Activated CD4-positive, alpha-beta T cell treated with anti-CD3 and anti-CD28 coated beads, Interleukin-2, amount 10 ng/mL, durations not matched to agents 24 days and 14 days (primary cell): ENCODE measurements at regions of chr7 and their contacts with region 1.

Region 1: GRCh38 chr7:102230593-102230992 is 56.1 kb upstream of the SH2B2 start:
- DNase-seq: no peak
- H3K4me3 Mint-ChIP-seq: no peak overlapping the region
- H3K27ac Mint-ChIP-seq: no peak overlapping the region
- H3K4me1 Mint-ChIP-seq: no peaks in the 10 kb centered on the region
- H3K27me3 Mint-ChIP-seq: no peaks in the 10 kb centered on the region

Region 2: DNA sequence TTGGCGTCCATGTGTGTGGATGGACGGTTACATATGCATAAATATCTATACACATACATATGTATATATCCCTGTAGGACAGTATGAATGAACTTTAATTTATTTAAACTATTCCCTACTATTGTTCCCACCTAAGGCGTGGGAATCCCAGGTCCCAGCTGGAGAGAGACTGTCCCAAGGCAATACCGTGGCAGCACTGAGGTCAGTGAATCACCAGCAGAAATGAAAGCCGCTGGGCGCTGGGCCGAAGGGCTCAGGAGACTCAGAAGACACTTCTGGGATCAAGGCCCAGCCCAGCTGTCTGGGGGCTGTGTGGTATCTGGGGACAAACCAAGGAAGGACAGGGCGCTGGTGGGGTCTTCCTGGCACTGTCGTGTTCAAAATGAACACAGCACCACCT is 551.9 kb before region 1 on chr7:
- intact Hi-C with region 1: loop called (anchors 5 kb)
- DNase-seq: no peak
- H3K4me3 Mint-ChIP-seq: no peak overlapping the region
- H3K27ac Mint-ChIP-seq: no peak overlapping the region
- H3K4me1 Mint-ChIP-seq: no peaks in the 10 kb centered on the region
- H3K27me3 Mint-ChIP-seq: no peaks in the 10 kb centered on the region